Caco-2 (cell line): ENCODE measurements at regions of chr10 and their contacts with region 1.

Region 1: DNA sequence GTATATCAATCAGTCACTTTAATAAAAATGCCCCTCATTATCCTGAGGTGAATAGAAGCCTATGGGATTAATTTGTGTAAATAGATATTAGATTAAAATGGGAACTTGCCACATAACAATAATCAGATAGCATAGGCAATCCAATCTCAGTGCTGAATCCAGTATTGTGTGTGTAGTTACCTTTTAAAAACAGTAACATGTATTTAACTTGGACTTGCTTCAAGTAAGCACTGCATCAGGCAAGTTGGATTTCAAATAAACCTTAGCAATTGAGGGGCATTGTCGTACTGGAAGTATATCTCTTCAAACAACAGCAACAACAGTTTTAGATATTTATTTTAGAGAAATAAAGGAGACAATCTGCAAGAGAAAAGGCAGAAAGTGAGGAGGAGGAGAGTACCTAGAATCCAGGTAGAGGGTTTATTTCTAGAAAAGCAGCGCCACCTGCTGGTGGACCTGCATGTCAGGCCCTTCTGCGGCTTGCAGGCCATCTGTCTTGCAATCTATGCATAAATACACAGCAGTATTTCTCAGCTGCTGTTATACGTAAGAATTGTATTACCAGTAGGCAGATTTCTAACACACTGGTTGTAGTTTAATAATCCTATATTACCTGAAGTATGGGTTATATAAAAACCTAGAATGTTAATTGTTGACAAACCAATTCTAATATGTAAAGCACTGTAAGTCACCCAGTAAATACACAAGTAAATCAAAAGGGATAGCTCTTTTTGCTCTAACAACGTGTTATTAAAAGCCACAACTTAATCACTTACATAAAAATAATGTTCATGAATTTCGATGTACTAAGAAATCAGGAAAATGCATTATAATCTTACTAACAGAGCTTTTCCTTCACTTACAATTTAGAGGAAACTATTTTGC is 652.8 kb downstream of the KCNMA1 start:
- DNase-seq: peak; percentile 77 to 83
- H3K4me3 ChIP-seq: no peak overlapping the region
- H3K4me3 Mint-ChIP-seq: no peak overlapping the region
- H3K27ac Mint-ChIP-seq: no peak overlapping the region
- H3K4me1 ChIP-seq: no peaks in the 10 kb centered on the region
- H3K4me1 Mint-ChIP-seq: no peaks in the 10 kb centered on the region
- H3K27me3 ChIP-seq: no peaks in the 10 kb centered on the region; the same call in 1 of the 2 replicates
- H3K27me3 Mint-ChIP-seq: peaks cover 4% of the 10 kb centered on the region
- CTCF ChIP-seq: peak; percentile 94

Region 2: GRCh38 chr10:76311752-76312636 is 672.8 kb before region 1 on chr10:
- CTCF ChIA-PET with region 1: no interaction called
- POLR2A ChIA-PET with region 1: no interaction called
- intact Hi-C with region 1: loop called (anchors 5 kb)
- DNase-seq: peak; percentile 61 to 67
- H3K4me3 ChIP-seq: no peak overlapping the region
- H3K4me3 Mint-ChIP-seq: no peak overlapping the region
- H3K27ac Mint-ChIP-seq: no peak overlapping the region
- H3K4me1 ChIP-seq: peaks cover 4% of the 10 kb centered on the region
- H3K4me1 Mint-ChIP-seq: no peaks in the 10 kb centered on the region
- H3K27me3 ChIP-seq: no peaks in the 10 kb centered on the region
- H3K27me3 Mint-ChIP-seq: no peaks in the 10 kb centered on the region
- CTCF ChIP-seq: peak; percentile 74 to 76

Region 3: DNA sequence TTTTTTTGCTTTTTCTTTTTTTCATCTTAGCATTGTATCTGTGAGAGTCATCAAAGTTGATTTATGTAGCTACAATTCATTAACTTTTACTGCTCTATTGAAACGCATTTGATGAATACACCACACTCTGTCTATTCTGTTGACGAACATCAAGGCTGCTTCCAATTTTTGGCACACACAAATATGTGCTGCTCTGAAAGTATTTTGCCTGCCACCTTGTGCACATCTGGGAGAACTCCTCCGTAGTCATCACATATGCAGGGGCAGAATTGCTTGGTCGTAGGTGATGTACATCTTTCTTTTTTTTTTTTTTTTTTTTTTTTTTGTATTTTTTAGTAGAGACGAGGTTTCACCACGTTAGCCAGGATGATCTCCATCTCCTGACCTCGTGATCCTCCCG is 144.0 kb before region 1 on chr10:
- CTCF ChIA-PET with region 1: no interaction called
- POLR2A ChIA-PET with region 1: no interaction called
- intact Hi-C with region 1: loop called (anchors 10 kb)
- DNase-seq: no peak
- H3K4me3 ChIP-seq: no peak overlapping the region
- H3K4me3 Mint-ChIP-seq: no peak overlapping the region
- H3K27ac Mint-ChIP-seq: no peak overlapping the region
- H3K4me1 ChIP-seq: no peaks in the 10 kb centered on the region
- H3K4me1 Mint-ChIP-seq: no peaks in the 10 kb centered on the region
- H3K27me3 ChIP-seq: no peaks in the 10 kb centered on the region; the same call in 1 of the 2 replicates
- H3K27me3 Mint-ChIP-seq: peaks cover 4% of the 10 kb centered on the region
- CTCF ChIP-seq: no peak